Activated CD8-positive, alpha-beta T cell treated with anti-CD3 and anti-CD28 coated beads, Interleukin-2, amount 10 ng/mL, durations not matched to agents 7 days and 5 days (primary cell): ENCODE measurements at regions of chr15 and their contacts with region 1.

Region 1: GRCh38 chr15:75367913-75368688 is at the start of gene MAN2C1:
- DNase-seq: peak; percentile 94
- ATAC-seq: peak; percentile 94
- H3K4me3 Mint-ChIP-seq: peak within 1 kb of the TSS; percentile 89
- H3K27ac Mint-ChIP-seq: peak within 1 kb of the TSS; percentile 94
- H3K4me1 Mint-ChIP-seq: peaks cover 29% of the 10 kb centered on the region
- H3K27me3 Mint-ChIP-seq: no peaks in the 10 kb centered on the region
- total RNA-seq, gene MAN2C1: 123 to 131 TPM

Region 2: DNA sequence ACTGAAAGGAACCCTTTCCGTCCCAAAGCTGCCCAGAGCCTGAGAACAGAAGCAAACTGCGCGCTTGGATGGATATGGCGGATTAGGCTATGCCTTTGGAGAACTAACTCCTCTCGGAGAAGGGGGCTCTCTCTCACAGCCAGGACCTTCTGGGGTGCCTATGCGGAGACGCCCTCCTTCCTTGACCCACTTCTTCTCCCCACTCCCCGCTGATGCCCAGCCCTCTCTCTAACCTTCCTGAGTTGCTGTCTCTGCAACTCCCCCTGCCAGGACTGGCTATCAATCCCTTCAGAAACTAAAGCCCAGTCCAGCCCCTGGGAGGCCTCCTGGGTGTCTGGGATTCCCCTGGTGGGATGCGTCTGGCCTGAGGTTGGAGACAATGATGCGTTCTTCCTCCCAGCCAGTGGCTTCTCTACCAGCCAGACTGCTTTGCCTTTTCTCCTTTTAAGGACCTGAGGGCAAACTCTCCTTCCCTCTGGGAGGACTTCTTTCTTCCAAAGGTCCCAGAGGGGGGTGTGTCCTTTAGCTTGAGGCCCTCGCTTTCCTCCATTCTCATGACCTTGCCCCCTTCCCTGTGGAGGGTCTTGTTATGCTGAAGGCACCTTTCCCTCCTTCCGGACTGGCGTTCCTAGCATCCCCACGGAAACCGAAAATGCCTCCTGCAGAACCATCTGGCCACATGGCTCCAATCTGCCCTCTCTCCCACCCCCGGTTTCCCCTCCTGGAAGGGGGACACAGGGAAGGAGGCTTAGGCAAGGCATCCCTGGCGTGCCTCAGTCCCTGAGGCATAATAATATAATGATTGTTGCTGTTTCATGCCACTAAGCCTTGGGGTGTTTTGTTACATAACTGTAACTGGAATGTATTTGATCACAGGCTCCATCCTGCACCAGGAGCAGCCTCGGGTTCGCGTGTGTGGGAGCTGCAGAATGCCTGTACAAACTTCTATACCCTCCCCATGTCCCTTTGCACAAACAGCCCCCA is 229.8 kb before region 1 on chr15:
- CTCF ChIA-PET with region 1: no interaction called
- POLR2A ChIA-PET with region 1: no interaction called
- DNase-seq: no peak
- ATAC-seq: no peak
- H3K4me3 Mint-ChIP-seq: no peak overlapping the region
- H3K27ac Mint-ChIP-seq: no peak overlapping the region
- H3K4me1 Mint-ChIP-seq: peaks cover 2% of the 10 kb centered on the region
- H3K27me3 Mint-ChIP-seq: peaks cover 5% of the 10 kb centered on the region

Region 3: DNA sequence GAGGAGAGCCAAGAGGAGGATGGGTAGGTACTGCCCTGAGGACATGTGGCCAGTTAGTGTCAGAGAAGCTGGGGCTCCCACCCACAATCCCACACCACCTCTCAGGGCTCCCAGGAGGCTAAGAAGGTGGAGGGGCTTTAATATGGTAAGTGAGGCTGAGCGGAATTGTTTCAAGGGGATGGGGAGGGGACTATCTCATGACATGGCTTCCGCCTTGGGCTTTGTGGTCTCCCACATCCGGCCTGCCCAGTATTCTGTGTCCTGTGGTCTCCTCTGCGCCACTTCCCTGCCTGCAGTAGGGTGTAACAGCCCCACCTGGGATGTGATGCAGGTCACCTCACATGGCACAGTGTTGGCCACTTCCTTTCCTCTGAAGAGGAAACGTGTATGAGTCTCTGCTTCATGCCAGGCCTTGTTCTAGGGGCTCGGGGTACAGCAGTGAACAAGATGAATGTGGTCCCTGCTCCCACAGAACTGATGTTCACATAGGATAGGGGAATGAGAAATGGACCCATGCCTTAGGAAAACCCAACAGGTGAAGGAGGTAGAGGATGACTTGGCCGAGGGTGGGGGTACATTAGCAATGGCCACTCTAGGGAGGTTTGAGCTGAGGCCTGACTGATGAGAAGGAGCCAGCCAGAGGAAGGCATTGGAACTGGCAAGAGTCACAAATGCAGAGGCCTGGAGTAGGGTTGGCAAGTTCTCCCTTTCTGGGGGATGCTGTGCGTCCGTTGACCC is 18.1 kb before region 1 on chr15:
- CTCF ChIA-PET with region 1: interaction called, 36 read pairs
- POLR2A ChIA-PET with region 1: interaction called, 9 read pairs
- DNase-seq: peak; percentile 95
- ATAC-seq: peak; percentile 86
- H3K4me3 Mint-ChIP-seq: peak overlapping the region; percentile 64
- H3K27ac Mint-ChIP-seq: peak overlapping the region; percentile 99
- H3K4me1 Mint-ChIP-seq: peaks cover 37% of the 10 kb centered on the region
- H3K27me3 Mint-ChIP-seq: peaks cover 18% of the 10 kb centered on the region

Region 4: GRCh38 chr15:75578948-75579920 is 211.1 kb after region 1 on chr15 and contains the start of gene PTPN9:
- CTCF ChIA-PET with region 1: interaction called, 14 read pairs
- POLR2A ChIA-PET with region 1: interaction called, 6 read pairs
- DNase-seq: peak; percentile 84
- ATAC-seq: peak; percentile 83
- H3K4me3 Mint-ChIP-seq: peak within 1 kb of the TSS; percentile 92
- H3K27ac Mint-ChIP-seq: peak within 1 kb of the TSS; percentile 94
- H3K4me1 Mint-ChIP-seq: peaks cover 18% of the 10 kb centered on the region
- H3K27me3 Mint-ChIP-seq: no peaks in the 10 kb centered on the region
- total RNA-seq, gene PTPN9: 46.3 to 48.7 TPM

Region 5: GRCh38 chr15:75639709-75640482 is 271.8 kb after region 1 on chr15 and contains the start of gene IMP3:
- CTCF ChIA-PET with region 1: interaction called, 57 read pairs
- POLR2A ChIA-PET with region 1: interaction called, 44 read pairs
- DNase-seq: peak; percentile 98
- ATAC-seq: peak; percentile 95
- H3K4me3 Mint-ChIP-seq: peak within 1 kb of the TSS; percentile 88
- H3K27ac Mint-ChIP-seq: peak within 1 kb of the TSS; percentile 95
- H3K4me1 Mint-ChIP-seq: peaks cover 34% of the 10 kb centered on the region
- H3K27me3 Mint-ChIP-seq: no peaks in the 10 kb centered on the region
- total RNA-seq, gene IMP3: 97.9 to 99.1 TPM